ENCODE measurements at regions of chr17 and their contacts with region 1.

Region 1: DNA sequence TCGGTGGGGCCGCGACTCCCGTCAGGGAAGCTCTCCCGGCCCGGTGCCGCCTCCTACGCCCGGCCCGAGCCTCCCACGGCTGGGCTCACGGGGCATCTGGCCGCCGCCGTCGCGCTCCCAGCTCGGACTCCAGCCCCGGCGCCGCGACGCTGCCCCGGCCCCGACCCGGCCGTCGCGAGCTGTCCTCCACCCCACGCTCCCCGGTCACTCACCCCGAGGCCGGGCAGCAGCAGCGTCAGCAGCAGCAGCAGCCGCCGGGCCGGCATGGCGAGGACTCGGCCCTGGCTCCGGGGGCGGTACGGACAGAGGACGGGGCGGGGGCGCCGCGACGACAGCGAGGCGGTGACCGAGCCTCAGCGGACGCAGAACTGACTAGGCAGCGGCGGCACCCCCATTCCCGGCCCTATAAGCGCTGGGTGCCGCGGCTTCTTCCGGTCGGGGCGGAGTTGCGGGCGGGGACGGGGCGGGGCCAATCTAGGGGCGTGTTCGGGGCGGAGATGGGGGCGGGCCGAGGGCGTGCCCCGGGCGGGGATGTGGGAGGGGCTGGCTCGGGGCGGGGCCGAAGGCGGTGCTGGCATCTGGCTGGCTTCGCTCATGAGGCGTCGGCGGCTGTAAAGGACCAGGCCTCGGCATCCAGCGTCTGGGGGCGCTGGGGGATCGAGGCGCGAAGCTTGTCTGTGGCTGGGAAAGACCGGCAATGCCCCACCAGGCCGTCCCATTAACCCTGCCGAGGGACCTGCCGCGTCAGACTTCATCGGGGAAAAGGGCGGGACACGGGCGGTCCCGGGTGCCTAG is at the start of gene ERN1:
- DNase-seq: peak; percentile 94 to 98
- H3K4me3 ChIP-seq: peak within 1 kb of the TSS; percentile 66 to 93 (median 73)
- H3K27ac ChIP-seq: peak within 1 kb of the TSS; percentile 93 to 100 (median 98)
- H3K4me1 ChIP-seq: peaks cover 14 to 66% (median 42%) of the 10 kb centered on the region in 4 donors
- H3K27me3 ChIP-seq: no peaks in the 10 kb centered on the region
- CTCF ChIP-seq: no peak
- EP300 ChIP-seq: peak; percentile 17
- POLR2A ChIP-seq: peak in 2 of 4 donors; percentile 9 to 77
- total RNA-seq, gene ERN1: 23.7 to 76.4 (median 33.8) TPM

Region 2: DNA sequence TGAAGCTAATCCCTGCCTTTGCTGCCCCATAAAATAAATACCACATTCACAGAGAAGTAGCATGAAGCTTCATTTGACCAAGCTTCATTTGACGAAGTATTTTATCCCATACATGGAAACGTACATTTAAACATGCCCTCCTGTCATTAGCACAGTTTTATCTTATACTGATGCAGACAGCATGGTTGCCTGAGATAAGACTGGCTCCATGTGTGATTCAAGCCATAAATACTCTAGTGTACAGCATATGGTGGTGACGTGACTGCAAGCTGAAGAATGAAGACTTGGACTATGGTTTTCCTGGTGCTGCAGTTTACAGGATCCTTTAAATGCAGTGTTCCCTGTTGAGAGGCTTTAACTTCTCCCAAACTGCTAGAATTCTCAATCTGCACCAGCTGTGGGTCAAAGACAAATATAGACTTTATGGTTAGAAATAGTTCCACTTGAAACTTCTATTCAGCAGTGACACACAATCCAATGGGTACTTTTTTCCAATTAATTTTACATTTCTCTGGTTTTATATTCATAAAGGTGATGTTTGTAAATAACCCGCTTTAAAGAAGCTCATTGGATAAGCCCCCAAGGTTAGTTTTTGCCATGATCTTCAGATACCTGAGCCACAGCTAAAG is 748.7 kb before region 1 on chr17:
- intact Hi-C with region 1: no loop called
- DNase-seq: no peak
- H3K4me3 ChIP-seq: no peak overlapping the region
- H3K27ac ChIP-seq: no peak overlapping the region
- H3K4me1 ChIP-seq: no peaks in the 10 kb centered on the region
- H3K27me3 ChIP-seq: no peaks in the 10 kb centered on the region
- CTCF ChIP-seq: no peak
- EP300 ChIP-seq: no peak
- POLR2A ChIP-seq: no peak

Region 3: GRCh38 chr17:63876855-63877254 is 253.1 kb before region 1 on chr17:
- intact Hi-C with region 1: no loop called
- DNase-seq: no peak
- H3K4me3 ChIP-seq: no peak overlapping the region
- H3K27ac ChIP-seq: no peak overlapping the region
- H3K4me1 ChIP-seq: no peaks in the 10 kb centered on the region
- H3K27me3 ChIP-seq: peaks cover 0 to 8% (median 0%) of the 10 kb centered on the region in 3 donors
- CTCF ChIP-seq: no peak
- EP300 ChIP-seq: no peak
- POLR2A ChIP-seq: no peak

Region 4: GRCh38 chr17:63919311-63919723 is 210.6 kb before region 1 on chr17:
- intact Hi-C with region 1: loop called (anchors 10 kb)
- DNase-seq: peak; percentile 63 to 83
- H3K4me3 ChIP-seq: no peak overlapping the region
- H3K27ac ChIP-seq: no peak overlapping the region
- H3K4me1 ChIP-seq: peaks cover 0 to 4% (median 0%) of the 10 kb centered on the region in 4 donors
- H3K27me3 ChIP-seq: peaks cover 0 to 19% (median 3%) of the 10 kb centered on the region in 3 donors
- CTCF ChIP-seq: peak in 6 of 7 experiments; percentile 86 to 98 (median 93)
- EP300 ChIP-seq: no peak
- POLR2A ChIP-seq: no peak

Region 5: GRCh38 chr17:64025732-64026294 is 104.1 kb before region 1 on chr17:
- intact Hi-C with region 1: loop called (anchors 5 kb)
- DNase-seq: peak; percentile 80 to 95
- H3K4me3 ChIP-seq: peak overlapping the region; percentile 3 to 22 (median 13)
- H3K27ac ChIP-seq: peak overlapping the region; percentile 25 to 77 (median 63)
- H3K4me1 ChIP-seq: peaks cover 10 to 24% (median 17%) of the 10 kb centered on the region in 4 donors
- H3K27me3 ChIP-seq: no peaks in the 10 kb centered on the region
- CTCF ChIP-seq: peak in 5 of 7 experiments; percentile 81 to 98 (median 90)
- EP300 ChIP-seq: no peak
- POLR2A ChIP-seq: no peak

Region 6: GRCh38 chr17:64056269-64057005 is 73.5 kb before region 1 on chr17:
- intact Hi-C with region 1: loop called (anchors 10 kb)
- DNase-seq: peak in 1 of 2 donors; percentile 54
- H3K4me3 ChIP-seq: no peak overlapping the region
- H3K27ac ChIP-seq: peak overlapping the region in 1 of 5 donors; percentile 56
- H3K4me1 ChIP-seq: peaks cover 0 to 16% (median 0%) of the 10 kb centered on the region in 4 donors
- H3K27me3 ChIP-seq: no peaks in the 10 kb centered on the region
- CTCF ChIP-seq: no peak
- EP300 ChIP-seq: no peak
- POLR2A ChIP-seq: no peak

Measured in stomach (tissue), 19 donors.